Activated CD4-positive, alpha-beta memory T cell treated with anti-CD3 and anti-CD28 coated beads, Interleukin-2, amount 10 ng/mL, durations not matched to agents 7 days and 5 days (primary cell): ENCODE measurements at regions of chr1 and their contacts with region 1.

Region 1: DNA sequence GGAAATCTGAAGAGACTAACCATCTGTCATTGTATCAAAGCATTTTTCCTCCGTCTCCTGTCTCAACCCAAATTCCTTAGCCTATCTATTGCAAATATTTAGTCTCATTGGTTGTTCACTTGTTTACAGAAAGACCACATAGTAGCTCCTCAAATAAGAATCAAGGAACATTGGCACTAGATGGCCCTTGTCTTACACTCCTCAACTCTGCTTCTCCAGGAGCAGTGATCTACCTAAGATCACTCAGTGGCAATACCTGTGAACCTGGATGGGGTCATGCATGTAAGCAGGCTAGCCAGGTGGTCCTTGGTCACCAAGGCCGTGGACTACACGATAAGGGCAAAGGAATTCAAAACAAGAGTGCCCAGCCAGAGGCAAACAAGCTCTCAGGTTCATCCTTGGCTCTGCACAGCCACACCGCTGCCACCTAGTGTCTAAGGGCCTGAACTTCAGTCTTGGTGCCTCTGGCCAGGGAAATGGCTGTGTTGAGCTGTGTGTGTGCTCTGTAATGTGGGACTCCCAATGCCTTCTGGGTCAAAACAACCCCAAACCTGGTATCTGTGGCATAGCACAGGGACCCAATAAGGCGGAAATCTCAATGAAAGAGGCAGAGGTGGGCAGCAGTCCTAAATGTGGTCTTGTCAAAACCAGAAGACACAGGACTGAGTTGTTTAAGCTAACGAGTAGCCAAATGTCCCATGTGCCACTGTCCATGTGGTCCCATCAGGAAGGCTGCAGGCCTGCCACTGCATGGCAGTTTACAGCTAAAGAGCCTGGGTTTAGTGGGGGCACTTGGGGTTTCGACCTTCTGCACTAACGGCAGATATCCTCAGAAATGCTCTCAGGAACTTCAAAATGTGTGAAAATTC is 54.5 kb downstream of the GPR161 start:
- DNase-seq: peak; percentile 75
- H3K4me3 Mint-ChIP-seq: no peak overlapping the region
- H3K27ac Mint-ChIP-seq: no peak overlapping the region
- H3K4me1 Mint-ChIP-seq: no peaks in the 10 kb centered on the region
- H3K27me3 Mint-ChIP-seq: no peaks in the 10 kb centered on the region

Region 2: GRCh38 chr1:167715157-167715999 is 366.9 kb before region 1 on chr1:
- CTCF ChIA-PET with region 1: interaction called, 20 read pairs
- POLR2A ChIA-PET with region 1: no interaction called
- DNase-seq: peak; percentile 92
- H3K4me3 Mint-ChIP-seq: peak overlapping the region; percentile 84
- H3K27ac Mint-ChIP-seq: peak overlapping the region; percentile 92
- H3K4me1 Mint-ChIP-seq: peaks cover 46% of the 10 kb centered on the region
- H3K27me3 Mint-ChIP-seq: peaks cover 7% of the 10 kb centered on the region

Region 3: DNA sequence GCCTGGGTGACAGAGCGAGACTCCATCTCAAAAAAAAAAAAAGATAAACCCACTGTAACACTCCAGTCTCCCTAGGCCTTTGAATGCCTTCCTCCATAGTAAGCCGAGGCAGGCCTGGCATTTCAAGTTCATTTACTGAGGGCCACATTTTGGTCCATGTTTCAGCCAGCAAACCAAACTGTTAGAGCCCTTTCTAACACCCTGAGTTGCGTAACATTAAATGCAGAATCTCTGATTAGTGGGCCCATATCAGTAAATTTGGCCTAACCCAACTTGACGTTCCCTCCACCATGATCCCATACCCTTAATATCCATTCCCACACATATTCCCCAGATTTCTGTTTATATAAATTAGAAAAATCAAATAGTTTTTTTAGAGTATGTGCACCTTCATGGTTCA is 348.0 kb before region 1 on chr1:
- CTCF ChIA-PET with region 1: no interaction called
- POLR2A ChIA-PET with region 1: no interaction called
- DNase-seq: no peak
- H3K4me3 Mint-ChIP-seq: no peak overlapping the region
- H3K27ac Mint-ChIP-seq: no peak overlapping the region
- H3K4me1 Mint-ChIP-seq: no peaks in the 10 kb centered on the region
- H3K27me3 Mint-ChIP-seq: no peaks in the 10 kb centered on the region

Region 4: DNA sequence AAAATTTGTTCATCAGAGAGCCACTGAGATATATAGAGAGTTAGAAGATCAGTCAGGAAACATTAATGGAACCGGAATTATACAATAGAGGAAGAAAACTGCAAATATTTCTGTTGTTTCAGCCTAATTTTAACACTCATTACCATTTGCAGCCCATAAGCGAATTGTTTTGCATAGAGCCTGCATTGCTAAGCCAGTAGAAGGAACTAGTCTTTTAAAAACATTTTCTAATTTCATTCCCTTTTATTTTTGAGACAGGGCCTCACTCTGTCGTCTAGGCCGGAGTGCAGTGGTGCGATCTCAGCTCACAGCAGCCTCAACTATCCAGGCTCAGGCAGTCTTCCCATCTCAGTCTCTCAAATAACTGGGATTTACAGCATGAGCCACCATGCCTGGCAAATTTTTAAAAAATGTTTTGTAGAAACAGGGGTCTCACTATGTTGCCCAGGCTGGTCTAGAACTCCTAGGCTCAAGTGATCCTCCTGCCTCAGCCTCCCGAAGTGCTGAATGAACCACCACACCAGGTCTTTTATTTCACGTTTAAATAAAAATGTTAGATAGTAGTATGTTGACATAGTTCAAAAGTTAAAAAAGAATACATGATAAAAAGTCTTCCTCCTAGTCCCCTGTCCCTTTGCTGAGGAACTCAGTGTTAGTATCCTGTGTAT is 335.1 kb before region 1 on chr1:
- CTCF ChIA-PET with region 1: no interaction called
- POLR2A ChIA-PET with region 1: no interaction called
- DNase-seq: no peak
- H3K4me3 Mint-ChIP-seq: no peak overlapping the region
- H3K27ac Mint-ChIP-seq: no peak overlapping the region
- H3K4me1 Mint-ChIP-seq: peaks cover 7% of the 10 kb centered on the region
- H3K27me3 Mint-ChIP-seq: no peaks in the 10 kb centered on the region

Region 5: GRCh38 chr1:167871331-167871730 is 210.9 kb before region 1 on chr1:
- CTCF ChIA-PET with region 1: no interaction called
- POLR2A ChIA-PET with region 1: no interaction called
- DNase-seq: no peak
- H3K4me3 Mint-ChIP-seq: no peak overlapping the region
- H3K27ac Mint-ChIP-seq: no peak overlapping the region
- H3K4me1 Mint-ChIP-seq: no peaks in the 10 kb centered on the region
- H3K27me3 Mint-ChIP-seq: no peaks in the 10 kb centered on the region

Region 6: DNA sequence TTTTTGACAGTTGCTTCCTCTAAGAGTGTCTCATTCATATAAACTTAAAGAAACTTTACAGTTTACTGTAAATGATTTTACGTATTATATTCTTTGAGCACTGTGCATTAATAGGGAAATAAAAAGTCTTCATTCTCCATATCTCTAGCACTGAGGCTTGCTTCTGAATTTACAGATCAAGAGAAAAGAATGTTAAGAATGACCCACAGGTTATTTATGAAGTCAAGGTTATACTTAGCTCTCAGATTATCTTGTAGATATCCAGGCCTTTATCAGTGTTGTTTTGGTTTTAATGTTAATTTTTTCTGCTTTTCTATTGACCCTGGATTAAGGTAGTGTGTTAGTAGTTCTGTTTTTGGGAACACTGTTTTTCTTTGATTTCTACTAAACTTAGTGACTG is 36.9 kb before region 1 on chr1:
- CTCF ChIA-PET with region 1: interaction called, 11 read pairs
- POLR2A ChIA-PET with region 1: no interaction called
- DNase-seq: no peak
- H3K4me3 Mint-ChIP-seq: no peak overlapping the region
- H3K27ac Mint-ChIP-seq: no peak overlapping the region
- H3K4me1 Mint-ChIP-seq: no peaks in the 10 kb centered on the region
- H3K27me3 Mint-ChIP-seq: no peaks in the 10 kb centered on the region

Region 7: GRCh38 chr1:168065506-168065905 is 16.7 kb before region 1 on chr1:
- CTCF ChIA-PET with region 1: interaction called, 23 read pairs
- POLR2A ChIA-PET with region 1: no interaction called
- DNase-seq: no peak
- H3K4me3 Mint-ChIP-seq: no peak overlapping the region
- H3K27ac Mint-ChIP-seq: no peak overlapping the region
- H3K4me1 Mint-ChIP-seq: no peaks in the 10 kb centered on the region
- H3K27me3 Mint-ChIP-seq: no peaks in the 10 kb centered on the region

Region 8: GRCh38 chr1:168100315-168101002 is 18.2 kb after region 1 on chr1:
- CTCF ChIA-PET with region 1: interaction called, 39 read pairs
- POLR2A ChIA-PET with region 1: no interaction called
- DNase-seq: no peak
- H3K4me3 Mint-ChIP-seq: no peak overlapping the region
- H3K27ac Mint-ChIP-seq: no peak overlapping the region
- H3K4me1 Mint-ChIP-seq: no peaks in the 10 kb centered on the region
- H3K27me3 Mint-ChIP-seq: no peaks in the 10 kb centered on the region